ENCODE measurements at regions of chr14 and their contacts with region 1.

Region 1: DNA sequence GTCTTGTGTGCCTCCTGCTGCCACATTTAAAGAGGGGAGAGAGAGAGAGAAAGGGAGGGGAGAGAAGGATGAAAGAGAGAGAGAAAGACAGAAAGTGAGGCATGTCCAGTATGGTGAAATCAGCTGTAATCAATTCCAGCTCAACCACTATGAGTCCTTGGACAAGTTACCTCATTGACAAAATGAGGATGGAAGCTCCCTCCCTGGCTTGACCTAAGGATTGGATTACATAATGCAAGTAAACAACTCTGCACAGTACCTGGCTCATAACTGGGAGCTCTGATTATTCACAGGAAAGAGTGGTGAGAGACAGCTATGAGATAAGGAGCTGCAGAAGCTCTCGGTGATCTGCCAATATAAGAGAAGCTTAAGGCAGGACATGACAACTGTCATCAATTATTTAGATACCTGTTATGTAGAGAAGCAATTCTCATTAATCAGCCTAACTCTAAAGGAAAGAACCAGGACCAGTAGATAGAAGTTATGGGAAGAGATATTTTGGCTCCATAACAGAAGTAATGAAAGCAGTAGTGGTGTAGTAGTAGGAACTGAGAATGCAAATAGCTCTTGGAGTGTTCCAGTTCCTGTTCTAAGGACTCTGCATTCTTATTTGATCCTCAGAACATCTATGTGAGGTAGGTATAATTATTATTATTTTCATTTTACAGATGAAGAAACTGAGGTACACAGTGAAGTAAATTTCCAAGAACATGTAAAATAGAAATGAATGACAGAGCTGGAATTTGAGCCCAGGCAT is 791.6 kb downstream of the DIO2 start:
- DNase-seq: no peak
- ATAC-seq: peak; percentile 27 to 85 (median 64)
- H3K4me3 ChIP-seq: no peak overlapping the region
- H3K27ac ChIP-seq: peak overlapping the region; percentile 78
- H3K4me1 ChIP-seq: peaks cover 10% of the 10 kb centered on the region
- H3K27me3 ChIP-seq: no peaks in the 10 kb centered on the region
- CTCF ChIP-seq: no peak

Region 2: DNA sequence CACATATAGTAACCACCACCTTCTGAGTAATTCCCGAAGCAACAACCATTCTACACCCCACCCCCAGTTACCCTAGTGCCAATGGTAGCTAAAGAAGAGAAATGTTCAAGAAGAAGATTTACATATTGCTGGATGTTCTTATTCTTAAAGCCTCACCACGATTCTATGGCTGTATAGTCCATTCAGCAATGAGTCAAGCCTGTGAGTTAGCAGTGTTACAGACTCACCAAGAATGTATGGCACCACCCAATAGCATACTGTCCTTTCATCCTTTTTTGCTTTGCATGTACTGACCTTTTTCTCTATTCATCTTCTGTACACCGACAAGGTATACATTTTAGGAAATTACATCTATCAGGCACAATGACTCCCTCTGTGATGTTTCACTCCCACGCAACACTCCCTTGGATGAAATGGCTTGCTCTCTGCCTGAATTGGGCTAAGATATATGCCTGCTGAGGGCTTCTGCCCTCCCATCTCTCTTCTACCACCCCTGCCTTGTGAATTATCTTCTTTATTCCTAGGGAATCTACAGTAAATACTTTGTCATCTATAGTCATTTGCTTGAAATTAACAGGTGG is 154.3 kb before region 1 on chr14:
- intact Hi-C with region 1: no loop called
- DNase-seq: no peak
- ATAC-seq: no peak
- H3K4me3 ChIP-seq: no peak overlapping the region
- H3K27ac ChIP-seq: no peak overlapping the region
- H3K4me1 ChIP-seq: no peaks in the 10 kb centered on the region
- H3K27me3 ChIP-seq: no peaks in the 10 kb centered on the region
- CTCF ChIP-seq: no peak

Region 3: DNA sequence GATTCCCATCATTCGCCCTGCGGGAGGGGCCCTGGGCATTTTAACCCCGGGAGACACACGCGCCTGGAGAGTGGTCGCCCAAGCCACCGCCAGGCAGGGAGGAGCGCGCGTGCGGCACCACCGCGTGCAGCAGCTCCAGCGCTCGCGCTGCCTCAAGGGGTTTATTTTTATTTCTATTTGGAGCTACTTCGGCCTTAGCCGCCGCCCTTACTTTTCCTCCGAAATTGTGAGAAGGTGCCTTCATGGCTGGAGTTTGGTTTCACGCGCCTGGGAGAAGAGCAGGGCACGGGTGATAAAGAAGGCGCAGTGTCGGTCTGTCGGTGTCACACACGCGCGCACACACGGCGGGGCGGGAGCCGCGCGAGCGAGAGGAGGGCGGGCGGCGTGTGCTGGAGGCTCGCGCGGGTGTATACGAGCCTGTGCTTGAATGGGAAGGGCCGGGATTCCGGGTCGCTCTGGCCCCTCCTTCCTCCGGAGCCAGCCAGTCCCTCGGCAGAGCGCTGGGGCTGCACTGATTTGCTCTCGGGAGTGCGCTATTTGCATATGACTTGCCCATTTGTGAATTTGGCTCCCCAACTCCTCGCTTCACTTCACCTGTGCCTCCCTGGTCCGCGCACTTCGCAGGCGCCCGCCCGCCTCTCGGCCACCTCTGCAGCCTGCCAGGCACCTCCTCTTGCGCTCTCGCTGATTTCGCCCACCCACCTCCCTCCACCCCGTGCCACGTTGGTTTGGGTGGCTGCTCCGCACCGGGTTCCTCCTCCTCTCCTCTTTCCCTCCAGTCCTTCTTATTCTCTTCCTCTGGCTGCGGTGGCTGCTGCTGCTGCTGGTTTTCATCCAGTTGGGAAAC is 140.7 kb before region 1 on chr14:
- intact Hi-C with region 1: loop called in 1 of 2 experiments (anchors 5 kb)
- DNase-seq: peak; percentile 47 to 82
- ATAC-seq: peak; percentile 96 to 100 (median 98)
- H3K4me3 ChIP-seq: peak overlapping the region; percentile 69
- H3K27ac ChIP-seq: no peak overlapping the region
- H3K4me1 ChIP-seq: no peaks in the 10 kb centered on the region
- H3K27me3 ChIP-seq: peaks cover 6 to 42% (median 8%) of the 10 kb centered on the region in 3 donors
- CTCF ChIP-seq: no peak

Measured in psoas muscle (tissue), 8 donors.